ENCODE measurements at regions of chr11 and their contacts with region 1.

Region 1: GRCh38 chr11:72736452-72737069 is 15.6 kb downstream of the ARAP1 start:
- DNase-seq: peak; percentile 47
- ATAC-seq: peak; percentile 41
- H3K4me3 Mint-ChIP-seq: peak overlapping the region; percentile 82
- H3K27ac Mint-ChIP-seq: peak overlapping the region; percentile 99
- H3K4me1 Mint-ChIP-seq: peaks cover 83% of the 10 kb centered on the region
- H3K27me3 Mint-ChIP-seq: no peaks in the 10 kb centered on the region
- CTCF ChIP-seq: no peak

Region 2: GRCh38 chr11:72762641-72763304 is 26.2 kb after region 1 on chr11:
- CTCF ChIA-PET with region 1: no interaction called
- POLR2A ChIA-PET with region 1: interaction called, 14 read pairs
- intact Hi-C with region 1: loop called (anchors 1 kb)
- DNase-seq: no peak
- ATAC-seq: peak; percentile 92
- H3K4me3 Mint-ChIP-seq: peak overlapping the region; percentile 17
- H3K27ac Mint-ChIP-seq: peak overlapping the region; percentile 84
- H3K4me1 Mint-ChIP-seq: peaks cover 25% of the 10 kb centered on the region
- H3K27me3 Mint-ChIP-seq: no peaks in the 10 kb centered on the region
- CTCF ChIP-seq: no peak

Region 3: GRCh38 chr11:72814286-72815109 is 77.9 kb after region 1 on chr11 and contains the start of gene ATG16L2:
- CTCF ChIA-PET with region 1: interaction called, 7 read pairs
- POLR2A ChIA-PET with region 1: interaction called, 12 read pairs
- intact Hi-C with region 1: loop called (anchors 2 kb)
- DNase-seq: peak; percentile 97
- ATAC-seq: peak; percentile 75
- H3K4me3 Mint-ChIP-seq: peak within 1 kb of the TSS; percentile 98
- H3K27ac Mint-ChIP-seq: peak within 1 kb of the TSS; percentile 94
- H3K4me1 Mint-ChIP-seq: peaks cover 54% of the 10 kb centered on the region
- H3K27me3 Mint-ChIP-seq: no peaks in the 10 kb centered on the region
- CTCF ChIP-seq: no peak
- total RNA-seq, gene ATG16L2: 73.5 and 96.7 TPM in 2 replicates

Region 4: DNA sequence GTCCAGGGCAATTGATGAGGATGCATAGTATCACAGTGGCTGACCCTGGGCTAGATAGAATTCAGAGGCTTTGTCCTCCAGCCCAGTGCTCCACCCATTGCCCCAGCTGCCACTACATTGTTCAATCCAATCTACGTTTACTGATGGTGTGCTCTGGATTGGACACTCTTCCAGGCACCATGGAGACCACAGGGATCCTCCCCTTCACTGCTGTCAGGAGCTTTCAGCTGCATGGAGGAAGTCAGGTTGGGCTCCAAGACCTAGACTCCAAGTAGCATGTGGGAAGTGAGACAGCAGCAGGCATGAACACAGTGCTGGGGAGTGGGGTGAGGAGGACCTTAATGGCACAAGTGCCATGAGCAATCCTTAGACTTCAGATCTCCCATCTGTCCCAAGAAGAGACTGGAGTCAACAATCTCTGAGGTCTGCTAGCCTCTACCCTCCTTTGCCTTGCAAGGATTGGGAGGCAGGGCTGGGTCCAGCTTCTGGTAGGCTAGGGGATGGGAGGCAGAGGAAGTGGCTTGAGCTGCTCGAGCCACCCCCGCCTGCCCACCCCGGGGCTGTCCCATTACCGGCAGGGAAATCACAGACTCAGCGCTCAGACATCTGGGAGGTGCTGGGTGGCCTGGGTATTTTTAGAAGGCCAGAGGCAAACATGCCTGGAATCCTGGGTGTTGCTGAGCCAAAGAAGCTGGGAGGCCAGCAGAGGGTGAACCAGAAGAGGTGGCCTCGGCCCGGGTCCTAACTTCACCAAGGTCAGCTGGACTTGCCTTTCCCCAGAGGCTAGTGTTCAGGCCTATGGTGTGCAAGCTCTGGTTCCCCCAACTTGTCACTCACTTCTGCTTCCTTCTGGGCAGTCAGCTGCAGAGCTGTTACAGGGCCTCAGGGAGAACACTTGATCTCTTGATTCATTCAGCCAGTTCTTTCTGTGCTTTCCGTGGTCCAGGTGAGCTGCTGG is 420.8 kb after region 1 on chr11:
- CTCF ChIA-PET with region 1: no interaction called
- POLR2A ChIA-PET with region 1: interaction called, 5 read pairs
- intact Hi-C with region 1: loop called (anchors 5 kb)
- DNase-seq: peak; percentile 51
- ATAC-seq: peak; percentile 51
- H3K4me3 Mint-ChIP-seq: peak overlapping the region; percentile 78
- H3K27ac Mint-ChIP-seq: peak overlapping the region; percentile 97
- H3K4me1 Mint-ChIP-seq: peaks cover 95% of the 10 kb centered on the region
- H3K27me3 Mint-ChIP-seq: no peaks in the 10 kb centered on the region
- CTCF ChIP-seq: no peak